ENCODE measurements at regions of chr4 and their contacts with region 1.

Region 1: GRCh38 chr4:120132935-120133334 is 66.3 kb upstream of the MAD2L1 start:
- DNase-seq: no peak
- H3K4me3 ChIP-seq: no peak overlapping the region
- H3K27ac ChIP-seq: no peak overlapping the region
- H3K4me1 ChIP-seq: no peaks in the 10 kb centered on the region
- H3K27me3 ChIP-seq: no peaks in the 10 kb centered on the region
- CTCF ChIP-seq: no peak
- EP300 ChIP-seq: no peak
- POLR2A ChIP-seq: no peak

Region 2: DNA sequence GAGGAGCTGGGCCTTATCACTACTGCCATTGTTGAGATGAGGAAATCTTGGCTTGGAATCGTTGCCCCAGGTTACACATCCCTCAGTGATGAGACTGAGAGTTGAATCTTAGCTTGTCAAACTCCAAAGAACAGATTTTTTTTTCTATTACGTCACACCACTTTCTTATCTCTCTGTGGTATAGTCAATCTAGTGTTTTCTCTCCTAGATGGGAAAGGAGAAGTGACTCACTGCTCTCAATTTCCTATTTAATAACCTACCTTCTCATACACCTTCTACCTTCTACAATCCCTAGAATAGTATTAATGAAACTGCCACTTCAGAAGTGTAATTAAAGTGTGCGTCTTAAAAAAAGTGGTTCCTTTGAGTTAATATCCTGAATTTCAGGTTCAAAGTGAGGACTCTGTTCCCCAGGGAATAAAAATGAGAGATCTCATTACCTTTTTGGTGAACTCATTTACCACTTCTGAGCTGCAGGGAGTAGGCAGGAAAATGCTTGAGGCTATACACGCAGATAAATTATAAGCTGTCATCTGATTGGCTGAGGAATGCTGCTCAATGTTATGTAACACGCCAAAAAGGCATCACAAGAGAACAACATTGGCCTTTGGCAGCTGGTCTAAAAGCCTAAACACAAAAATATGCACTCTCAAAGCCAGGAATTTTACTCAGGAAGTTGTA is 125.6 kb before region 1 on chr4:
- intact Hi-C with region 1: no loop called
- DNase-seq: no peak
- H3K4me3 ChIP-seq: no peak overlapping the region
- H3K27ac ChIP-seq: no peak overlapping the region
- H3K4me1 ChIP-seq: peaks cover 2% of the 10 kb centered on the region
- H3K27me3 ChIP-seq: no peaks in the 10 kb centered on the region
- CTCF ChIP-seq: no peak
- EP300 ChIP-seq: no peak
- POLR2A ChIP-seq: no peak

Region 3: DNA sequence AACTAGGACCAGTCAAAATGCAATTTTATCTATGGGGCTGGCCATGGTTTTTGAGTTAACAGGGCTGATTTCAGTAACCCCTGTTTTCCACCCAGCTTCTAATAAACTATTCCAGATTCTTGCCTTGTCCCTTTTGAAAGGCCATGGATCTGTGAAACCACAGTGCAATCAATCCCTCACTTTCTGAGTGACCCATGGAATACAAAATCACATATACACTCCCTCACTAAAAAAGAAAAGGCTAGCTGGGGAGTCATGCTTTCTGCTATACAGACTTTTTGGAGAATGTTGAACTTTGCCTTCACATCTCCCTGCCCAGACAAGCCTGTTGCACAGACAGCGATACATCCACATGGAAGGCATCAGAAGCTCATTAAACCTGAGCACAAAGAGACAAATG is 114.1 kb before region 1 on chr4:
- intact Hi-C with region 1: no loop called
- DNase-seq: no peak
- H3K4me3 ChIP-seq: no peak overlapping the region
- H3K27ac ChIP-seq: no peak overlapping the region
- H3K4me1 ChIP-seq: no peaks in the 10 kb centered on the region
- H3K27me3 ChIP-seq: no peaks in the 10 kb centered on the region
- CTCF ChIP-seq: no peak
- EP300 ChIP-seq: no peak
- POLR2A ChIP-seq: no peak

Region 4: DNA sequence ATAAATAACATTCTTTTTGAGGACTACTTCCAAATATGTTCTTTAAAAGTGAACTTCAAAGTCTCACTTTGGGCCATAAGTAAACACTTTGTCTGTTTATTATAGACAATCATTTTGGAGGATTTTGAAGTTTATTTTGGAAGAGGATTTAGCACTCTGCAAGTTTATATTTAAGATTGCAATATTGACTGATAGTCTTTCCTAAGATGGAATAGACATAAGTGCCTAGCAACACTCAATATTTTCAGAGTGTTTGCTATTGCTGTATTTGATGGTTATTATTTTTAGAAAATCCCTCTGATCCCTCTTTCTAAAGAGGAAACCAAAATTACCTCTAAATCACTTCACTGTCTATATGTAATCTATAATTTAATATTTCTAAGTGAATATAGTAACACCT is 23.5 kb before region 1 on chr4:
- intact Hi-C with region 1: loop called in 1 of 4 experiments (anchors 2 kb)
- DNase-seq: no peak
- H3K4me3 ChIP-seq: no peak overlapping the region
- H3K27ac ChIP-seq: no peak overlapping the region
- H3K4me1 ChIP-seq: no peaks in the 10 kb centered on the region
- H3K27me3 ChIP-seq: no peaks in the 10 kb centered on the region
- CTCF ChIP-seq: no peak
- EP300 ChIP-seq: no peak
- POLR2A ChIP-seq: no peak

Region 5: GRCh38 chr4:120228086-120228485 is 95.2 kb after region 1 on chr4:
- intact Hi-C with region 1: no loop called
- DNase-seq: no peak
- H3K4me3 ChIP-seq: no peak overlapping the region
- H3K27ac ChIP-seq: no peak overlapping the region
- H3K4me1 ChIP-seq: no peaks in the 10 kb centered on the region
- H3K27me3 ChIP-seq: no peaks in the 10 kb centered on the region
- CTCF ChIP-seq: no peak
- EP300 ChIP-seq: no peak
- POLR2A ChIP-seq: no peak

Measured in ovary (tissue), 10 donors.